Mammary epithelial cell (primary cell): ENCODE measurements at regions of chr17 and their contacts with region 1.

Region 1: DNA sequence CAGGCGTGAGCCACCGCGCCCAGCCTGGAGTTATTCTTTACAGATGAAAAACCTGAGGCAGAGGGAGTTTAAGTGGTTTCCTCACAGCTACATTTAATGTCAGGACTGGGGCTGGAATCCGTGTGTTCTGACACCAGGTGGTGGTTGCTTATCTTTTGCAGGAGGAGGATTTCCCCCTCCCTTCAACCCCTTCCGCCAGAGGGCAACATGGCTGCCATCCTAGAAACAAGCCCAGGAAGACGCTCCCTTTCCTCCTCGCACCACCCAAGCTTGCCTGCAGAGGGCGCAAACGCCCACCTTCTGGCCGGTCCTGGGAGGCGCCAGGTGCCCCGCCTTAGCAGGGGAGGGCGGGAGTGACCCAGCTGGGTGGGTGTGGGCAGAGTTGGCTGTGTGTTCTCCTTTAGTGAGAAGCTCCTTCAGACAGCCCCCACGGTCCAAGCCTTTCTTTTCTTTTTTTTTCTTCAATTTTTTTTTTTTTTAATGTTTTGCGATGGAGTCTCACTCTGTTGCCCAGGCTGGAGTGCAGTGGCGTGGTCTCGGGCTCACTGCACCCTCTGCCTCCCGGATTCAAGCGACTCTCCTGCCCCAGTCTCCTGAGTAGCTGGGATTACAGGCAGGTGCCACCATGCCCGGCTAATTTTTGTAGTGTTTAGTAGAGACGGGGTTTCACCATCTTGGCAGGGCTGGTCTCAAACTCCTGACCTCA is 9.9 kb upstream of the RAP1GAP2 start:
- DNase-seq: peak; percentile 75
- H3K4me3 ChIP-seq: no peak overlapping the region
- H3K27ac ChIP-seq: no peak overlapping the region
- H3K4me1 ChIP-seq: no peaks in the 10 kb centered on the region
- H3K27me3 ChIP-seq: no peaks in the 10 kb centered on the region
- CTCF ChIP-seq: peak; percentile 76 to 91

Region 2: DNA sequence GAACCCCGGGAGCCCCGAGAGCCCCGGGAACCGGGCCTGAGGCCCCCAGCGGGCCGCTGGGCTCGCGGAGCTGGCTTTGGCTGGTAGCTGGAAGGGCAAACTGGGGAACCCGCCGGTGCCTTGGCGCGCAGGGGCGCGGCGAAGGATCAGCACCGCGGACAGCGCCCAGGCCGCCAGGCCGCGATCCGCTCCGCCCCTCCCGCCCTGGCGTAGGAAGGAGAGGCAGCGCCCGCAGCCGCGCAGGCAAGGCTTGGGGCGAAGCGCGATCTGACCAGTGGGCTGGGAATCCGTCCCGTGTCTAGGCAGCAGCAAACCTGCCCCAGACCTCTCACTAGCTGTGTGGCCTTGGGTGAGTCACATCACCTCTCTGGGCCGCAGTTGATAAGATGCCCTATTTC is 36.5 kb before region 1 on chr17:
- CTCF ChIA-PET with region 1: no interaction called
- dilution Hi-C with region 1: no loop called
- in situ Hi-C with region 1: no loop called
- intact Hi-C with region 1: no loop called
- DNase-seq: peak; percentile 67
- H3K4me3 ChIP-seq: no peak overlapping the region
- H3K27ac ChIP-seq: no peak overlapping the region
- H3K4me1 ChIP-seq: peaks cover 3% of the 10 kb centered on the region
- H3K27me3 ChIP-seq: peaks cover 4% of the 10 kb centered on the region
- CTCF ChIP-seq: no peak

Region 3: GRCh38 chr17:3012926-3013581 is 226.7 kb after region 1 on chr17:
- CTCF ChIA-PET with region 1: no interaction called
- dilution Hi-C with region 1: no loop called
- in situ Hi-C with region 1: no loop called
- intact Hi-C with region 1: loop called (anchors 1 kb)
- DNase-seq: peak; percentile 26
- H3K4me3 ChIP-seq: no peak overlapping the region
- H3K27ac ChIP-seq: no peak overlapping the region
- H3K4me1 ChIP-seq: no peaks in the 10 kb centered on the region
- H3K27me3 ChIP-seq: no peaks in the 10 kb centered on the region
- CTCF ChIP-seq: peak; percentile 63 to 64

Region 4: GRCh38 chr17:3189961-3190360 is 403.6 kb after region 1 on chr17:
- CTCF ChIA-PET with region 1: interaction called, 14 read pairs
- dilution Hi-C with region 1: no loop called
- in situ Hi-C with region 1: no loop called
- intact Hi-C with region 1: no loop called
- DNase-seq: no peak
- H3K4me3 ChIP-seq: no peak overlapping the region
- H3K27ac ChIP-seq: no peak overlapping the region
- H3K4me1 ChIP-seq: no peaks in the 10 kb centered on the region
- H3K27me3 ChIP-seq: no peaks in the 10 kb centered on the region
- CTCF ChIP-seq: no peak